Heart left ventricle (tissue), 16 donors: ENCODE measurements at regions of chr12 and their contacts with region 1.

Region 1: DNA sequence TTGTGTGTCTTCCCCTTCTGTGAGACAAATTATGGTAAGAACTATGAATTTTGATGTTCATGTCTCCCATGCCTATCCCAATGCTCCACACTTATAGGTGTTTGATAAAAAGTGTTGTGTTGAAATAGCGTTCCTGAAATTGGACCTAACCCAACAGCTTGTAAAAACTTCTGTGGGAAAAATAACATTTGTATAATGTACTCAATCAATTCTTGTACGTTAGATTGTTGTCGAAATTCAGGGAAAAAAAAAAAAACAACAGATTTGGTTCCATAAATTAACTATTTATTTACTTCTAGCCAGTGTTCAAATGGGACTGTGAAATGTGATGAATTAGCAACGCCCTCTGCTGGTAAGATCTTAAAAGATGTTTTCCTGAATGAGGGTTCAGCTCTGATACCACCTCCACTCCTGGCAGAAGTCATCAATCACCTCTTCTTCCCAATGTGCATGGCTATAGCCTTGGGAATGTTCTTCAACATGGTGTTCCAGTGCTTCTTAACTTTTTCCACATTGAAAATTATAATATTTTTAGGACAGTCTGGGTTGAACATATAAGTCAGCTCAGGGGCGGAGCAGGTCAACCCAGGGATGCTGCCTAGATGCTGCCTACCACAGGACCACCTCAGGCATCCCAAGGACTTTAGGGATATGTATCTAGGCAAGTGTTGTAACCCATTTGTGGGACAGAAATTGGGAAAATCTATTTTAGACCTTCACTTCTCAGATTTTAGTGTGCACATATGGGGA is 170.6 kb downstream of the OTOGL start:
- DNase-seq: peak in 1 of 5 donors; percentile 12
- ATAC-seq: peak in 2 of 4 donors; percentile 50 to 51
- H3K4me3 ChIP-seq: no peak overlapping the region
- H3K27ac ChIP-seq: no peak overlapping the region
- H3K4me1 ChIP-seq: peaks cover 0 to 8% (median 0%) of the 10 kb centered on the region in 12 donors
- H3K27me3 ChIP-seq: no peaks in the 10 kb centered on the region
- CTCF ChIP-seq: peak; percentile 51 to 83 (median 66)
- POLR2A ChIP-seq: no peak

Region 2: DNA sequence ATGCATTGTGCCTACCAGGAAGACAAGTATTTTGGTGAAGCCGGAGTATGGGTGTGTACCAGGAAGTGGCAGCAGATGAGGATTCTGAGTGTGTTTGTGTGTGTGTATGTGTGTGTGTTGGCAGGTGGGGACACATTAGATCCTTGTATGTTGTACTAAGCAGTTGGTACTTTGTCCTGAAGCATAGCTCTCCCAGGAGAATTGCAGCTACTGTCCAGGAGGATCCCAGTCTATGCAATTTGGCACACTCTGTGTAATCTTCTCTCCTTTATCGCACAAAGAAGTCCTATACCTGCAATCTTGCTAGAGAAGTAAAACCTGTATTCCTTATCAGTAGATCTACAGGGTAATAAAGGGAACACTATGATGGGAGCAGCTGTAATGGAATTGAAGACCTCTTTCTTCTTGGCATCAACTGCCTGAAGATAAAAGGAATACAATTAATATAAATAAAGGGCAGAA is 855.7 kb before region 1 on chr12:
- intact Hi-C with region 1: loop called in 4 of 10 experiments (anchors 5 to 10 kb)
- DNase-seq: no peak
- ATAC-seq: no peak
- H3K4me3 ChIP-seq: no peak overlapping the region
- H3K27ac ChIP-seq: no peak overlapping the region
- H3K4me1 ChIP-seq: no peaks in the 10 kb centered on the region
- H3K27me3 ChIP-seq: no peaks in the 10 kb centered on the region
- CTCF ChIP-seq: no peak
- POLR2A ChIP-seq: no peak

Region 3: DNA sequence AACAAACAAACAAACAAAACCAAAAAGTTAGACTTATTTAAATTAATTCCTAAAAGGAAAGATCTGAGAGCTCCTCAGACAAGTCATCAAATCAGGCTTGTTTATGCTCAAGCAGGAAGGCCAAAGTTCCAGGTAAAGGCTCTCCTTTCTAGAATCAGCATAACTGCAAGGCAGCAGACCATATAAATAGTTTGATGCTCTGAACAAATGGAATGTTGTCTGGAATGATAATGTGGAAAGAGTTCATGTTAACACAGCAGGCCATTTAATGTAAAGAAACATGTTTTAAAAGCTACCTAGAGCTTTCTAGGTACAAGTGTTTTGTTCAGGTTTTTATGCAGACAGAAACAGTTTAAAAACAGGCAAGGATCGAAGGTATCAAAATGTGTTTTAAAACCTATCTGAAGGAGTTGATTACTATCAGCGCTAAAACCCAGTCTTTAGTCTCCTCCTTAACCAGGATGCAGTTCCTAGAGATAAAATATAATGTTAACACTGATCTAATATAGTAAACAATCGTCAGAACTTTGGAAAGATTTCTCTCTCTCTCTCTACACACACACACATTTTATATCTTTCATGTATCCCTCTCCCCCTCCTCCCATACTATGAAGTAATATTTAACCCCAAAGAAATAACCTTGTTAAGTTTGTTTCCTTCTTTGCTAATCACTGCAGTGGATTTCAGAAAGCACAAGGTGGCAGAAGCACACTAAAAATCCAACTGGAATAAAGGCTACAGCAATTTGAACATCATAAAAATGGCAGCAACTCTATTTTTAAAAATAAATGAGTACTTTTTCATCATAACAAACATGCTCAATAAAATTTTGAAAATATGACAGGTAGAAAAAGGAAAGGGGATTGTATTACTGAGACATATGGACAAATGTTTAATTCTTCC is 714.7 kb before region 1 on chr12:
- intact Hi-C with region 1: loop called (anchors 2 to 5 kb)
- DNase-seq: no peak
- ATAC-seq: peak in 1 of 4 donors; percentile 45
- H3K4me3 ChIP-seq: no peak overlapping the region
- H3K27ac ChIP-seq: peak overlapping the region in 1 of 12 donors; percentile 38
- H3K4me1 ChIP-seq: peaks cover 0 to 45% (median 7%) of the 10 kb centered on the region in 12 donors
- H3K27me3 ChIP-seq: no peaks in the 10 kb centered on the region
- CTCF ChIP-seq: peak; percentile 31 to 80 (median 62)
- POLR2A ChIP-seq: no peak

Region 4: GRCh38 chr12:79886917-79887519 is 383.0 kb before region 1 on chr12:
- intact Hi-C with region 1: loop called in 1 of 10 experiments (anchors 10 kb)
- DNase-seq: no peak
- ATAC-seq: peak in 2 of 4 donors; percentile 63 to 69
- H3K4me3 ChIP-seq: no peak overlapping the region
- H3K27ac ChIP-seq: no peak overlapping the region
- H3K4me1 ChIP-seq: peaks cover 0 to 90% (median 60%) of the 10 kb centered on the region in 12 donors
- H3K27me3 ChIP-seq: no peaks in the 10 kb centered on the region
- CTCF ChIP-seq: peak; percentile 33 to 66 (median 56)
- POLR2A ChIP-seq: no peak

Region 5: DNA sequence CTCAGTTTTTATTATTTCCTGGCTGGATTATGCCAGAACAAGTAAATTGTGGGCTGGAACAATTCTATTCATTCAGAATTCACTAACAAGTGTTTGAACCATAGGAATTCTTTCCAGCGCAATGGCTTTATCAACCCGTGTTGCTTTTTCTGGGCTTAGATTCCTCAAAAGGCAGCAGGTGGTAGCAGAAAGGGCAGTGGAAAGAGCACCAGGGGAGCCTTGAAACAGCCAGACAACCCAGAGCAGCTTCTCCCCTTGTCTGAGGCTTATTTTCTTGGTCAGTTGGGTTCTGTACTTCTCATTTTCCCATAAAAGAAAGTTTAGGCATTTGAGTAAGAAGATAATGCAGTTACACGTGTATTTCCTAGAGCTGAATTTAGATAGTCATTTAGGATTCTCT is 39.9 kb before region 1 on chr12:
- intact Hi-C with region 1: loop called in 1 of 10 experiments (anchors 5 kb)
- DNase-seq: no peak
- ATAC-seq: no peak
- H3K4me3 ChIP-seq: no peak overlapping the region
- H3K27ac ChIP-seq: peak overlapping the region in 1 of 12 donors; percentile 7
- H3K4me1 ChIP-seq: peaks cover 0 to 16% (median 7%) of the 10 kb centered on the region in 12 donors
- H3K27me3 ChIP-seq: no peaks in the 10 kb centered on the region
- CTCF ChIP-seq: no peak
- POLR2A ChIP-seq: no peak

Region 6: DNA sequence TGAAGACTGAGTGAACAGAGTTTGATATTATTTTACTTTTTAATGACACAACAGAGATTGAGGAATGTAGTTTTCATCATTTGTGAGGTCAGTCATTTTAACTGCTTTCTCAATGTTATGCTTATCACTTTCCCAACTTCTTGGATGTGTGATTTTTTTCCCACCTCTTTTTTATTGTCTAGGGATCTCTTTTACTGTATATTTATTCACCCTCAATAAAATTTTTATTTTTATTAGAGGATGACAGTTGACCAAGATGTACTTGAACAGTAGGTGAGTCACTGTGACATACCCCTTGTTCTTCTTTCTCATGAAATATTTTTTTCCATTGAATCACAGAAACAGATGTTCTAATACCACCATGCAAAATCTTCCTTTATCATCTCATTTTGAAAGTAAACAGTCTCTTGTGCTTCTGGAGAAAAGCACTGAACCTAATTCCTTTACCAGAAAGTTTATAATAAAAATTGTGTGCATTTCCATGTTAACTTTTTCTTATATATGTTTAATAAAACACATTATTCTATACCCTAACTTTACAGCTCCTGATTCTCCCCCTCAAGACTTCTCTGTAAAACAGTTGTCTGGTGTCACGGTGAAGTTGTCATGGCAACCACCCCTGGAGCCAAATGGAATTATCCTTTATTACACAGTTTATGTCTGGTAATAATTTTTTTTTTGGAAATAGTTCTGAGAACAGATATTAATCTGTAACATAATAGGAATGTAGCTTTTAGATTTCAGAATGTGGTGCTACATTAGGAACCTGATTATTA is 240.0 kb after region 1 on chr12:
- intact Hi-C with region 1: no loop called
- DNase-seq: no peak
- ATAC-seq: no peak
- H3K4me3 ChIP-seq: no peak overlapping the region
- H3K27ac ChIP-seq: no peak overlapping the region
- H3K4me1 ChIP-seq: no peaks in the 10 kb centered on the region
- H3K27me3 ChIP-seq: no peaks in the 10 kb centered on the region
- CTCF ChIP-seq: no peak
- POLR2A ChIP-seq: no peak